HEK293 (cell line): ENCODE measurements at regions of chr1 and their contacts with region 1.

Region 1: GRCh38 chr1:109532365-109533136 is 7.1 kb upstream of the GPR61 start:
- H3K4me3 ChIP-seq: no peak overlapping the region
- H3K27ac ChIP-seq: no peak overlapping the region
- H3K4me1 ChIP-seq: no peaks in the 10 kb centered on the region
- CTCF ChIP-seq: peak; percentile 82

Region 2: GRCh38 chr1:109277434-109278204 is 254.9 kb before region 1 on chr1:
- CTCF ChIA-PET with region 1: interaction called, 31 read pairs
- POLR2A ChIA-PET with region 1: interaction called, 3 read pairs
- H3K4me3 ChIP-seq: no peak overlapping the region
- H3K27ac ChIP-seq: no peak overlapping the region
- H3K4me1 ChIP-seq: peaks cover 10% of the 10 kb centered on the region
- CTCF ChIP-seq: peak; percentile 89

Region 3: DNA sequence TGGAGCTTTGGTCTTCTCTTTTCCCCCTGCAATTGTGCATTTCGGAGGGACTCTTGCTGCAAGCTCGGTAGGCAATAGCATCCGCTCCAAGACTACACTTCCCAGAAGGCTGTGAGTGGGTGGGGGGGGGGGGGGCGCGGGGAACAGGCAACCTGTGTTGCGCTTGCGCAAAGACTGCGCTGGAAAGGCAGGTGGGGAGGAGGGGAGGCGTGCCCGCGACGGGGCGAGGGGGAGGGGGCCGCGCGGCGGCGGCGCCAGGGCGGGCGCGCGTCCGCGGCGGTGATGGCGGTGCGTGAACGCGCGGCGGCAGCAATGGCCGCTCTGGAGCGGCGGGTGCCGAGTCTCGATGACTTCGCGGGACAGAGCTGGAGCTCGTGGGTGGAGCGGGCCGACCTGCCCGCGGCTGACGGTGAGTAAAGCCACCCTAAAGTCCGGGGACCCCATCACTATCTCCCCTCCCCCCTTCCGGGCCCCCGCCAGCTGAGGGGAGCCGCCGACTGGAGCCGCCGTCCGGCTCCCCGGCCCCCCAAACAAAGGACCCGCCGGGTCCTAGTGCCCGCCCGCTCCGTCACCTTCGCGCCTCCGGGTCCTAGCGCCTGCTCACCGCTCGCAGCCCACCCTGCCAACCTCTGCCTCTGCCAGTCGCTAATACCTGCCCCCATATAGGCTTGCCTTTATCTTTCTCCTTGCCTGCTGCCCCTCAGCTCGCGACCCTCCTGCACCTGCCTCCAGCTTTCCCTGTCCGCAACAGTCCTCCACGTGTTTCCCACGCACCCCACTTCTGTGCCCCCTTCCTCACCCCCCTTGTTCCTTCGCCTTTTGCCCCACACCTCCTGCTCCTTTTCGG is 48.7 kb before region 1 on chr1 and contains the start of gene ATXN7L2:
- CTCF ChIA-PET with region 1: interaction called, 1,152 read pairs
- POLR2A ChIA-PET with region 1: interaction called, 4 read pairs
- H3K4me3 ChIP-seq: peak within 1 kb of the TSS; percentile 60
- H3K27ac ChIP-seq: peak within 1 kb of the TSS; percentile 81
- H3K4me1 ChIP-seq: no peaks in the 10 kb centered on the region
- CTCF ChIP-seq: no peak; the same call in 1 of the 2 replicates

Region 4: GRCh38 chr1:109521002-109521951 is 11.3 kb before region 1 on chr1:
- CTCF ChIA-PET with region 1: interaction called, 1,152 read pairs
- POLR2A ChIA-PET with region 1: no interaction called
- H3K4me3 ChIP-seq: no peak overlapping the region
- H3K27ac ChIP-seq: no peak overlapping the region
- H3K4me1 ChIP-seq: no peaks in the 10 kb centered on the region
- CTCF ChIP-seq: no peak